ENCODE measurements at regions of chr6 and their contacts with region 1.

Region 1: GRCh38 chr6:43769526-43770416 is at the start of gene VEGFA:
- DNase-seq: peak; percentile 97
- CTCF ChIP-seq: peak; percentile 99

Region 2: GRCh38 chr6:43723737-43724295 is 46.0 kb before region 1 on chr6:
- CTCF ChIA-PET with region 1: interaction called, 28 read pairs
- POLR2A ChIA-PET with region 1: no interaction called
- DNase-seq: peak; percentile 82
- CTCF ChIP-seq: peak; percentile 65

Region 3: DNA sequence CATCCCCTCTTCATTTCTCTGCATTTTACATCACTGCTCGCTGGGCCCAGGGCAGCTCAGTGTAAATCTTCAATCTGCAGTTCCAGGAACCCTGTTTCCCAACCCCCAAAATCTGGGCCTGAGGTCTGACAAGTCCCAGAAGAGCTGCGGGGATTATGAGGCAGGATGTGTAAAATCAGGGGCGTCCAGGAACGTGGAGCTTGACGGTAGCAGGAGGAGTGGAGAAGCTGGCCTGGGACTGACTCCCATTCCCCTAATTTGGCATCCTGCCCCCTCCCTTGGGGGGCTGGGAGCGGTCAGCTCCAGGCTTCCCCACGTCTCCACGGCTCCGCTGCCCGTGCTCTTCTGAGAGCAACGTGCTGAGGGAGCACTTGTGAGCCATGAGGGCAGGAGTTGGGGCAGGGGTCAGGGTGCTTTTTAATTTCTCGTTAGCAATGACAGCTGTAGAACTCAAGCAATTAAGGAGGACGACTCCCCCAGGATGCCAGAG is 23.1 kb before region 1 on chr6:
- CTCF ChIA-PET with region 1: interaction called, 142 read pairs
- POLR2A ChIA-PET with region 1: no interaction called
- DNase-seq: no peak
- CTCF ChIP-seq: no peak

Region 4: DNA sequence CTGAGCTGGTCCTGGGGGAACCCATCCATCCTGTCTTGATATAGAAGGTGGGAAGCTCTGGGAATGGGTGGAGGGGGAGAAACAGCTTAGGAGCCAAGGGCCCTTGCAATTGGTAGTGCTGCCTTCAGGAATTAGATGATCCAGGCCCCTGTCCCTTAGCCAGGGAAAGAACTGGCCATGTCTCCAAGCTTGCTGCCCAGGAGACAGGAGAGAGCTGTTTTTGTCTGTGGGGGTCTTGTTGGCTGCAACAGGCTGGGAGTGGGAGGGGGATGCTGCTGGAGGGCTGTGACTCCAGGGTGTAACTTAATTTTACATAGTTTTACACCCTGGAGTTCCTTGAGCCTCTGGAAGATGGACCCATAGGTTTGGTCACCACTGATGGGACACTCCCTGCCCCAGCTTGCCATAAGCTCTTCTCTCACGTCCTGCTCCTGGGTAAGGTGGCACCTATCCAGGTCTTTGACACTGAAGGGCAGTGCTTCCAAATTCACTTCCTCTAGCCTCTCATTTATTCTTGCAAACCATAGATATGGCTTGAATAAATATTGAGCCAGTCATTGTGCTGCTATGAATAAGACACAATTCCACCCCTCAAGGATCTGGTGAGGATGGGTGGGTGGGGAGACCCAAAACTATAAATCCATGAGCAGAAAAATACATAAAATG is 17.0 kb after region 1 on chr6:
- CTCF ChIA-PET with region 1: interaction called, 33 read pairs
- POLR2A ChIA-PET with region 1: no interaction called
- DNase-seq: no peak
- CTCF ChIP-seq: no peak

Region 5: GRCh38 chr6:43916924-43917877 is 147.4 kb after region 1 on chr6:
- CTCF ChIA-PET with region 1: no interaction called
- POLR2A ChIA-PET with region 1: no interaction called
- DNase-seq: no peak
- CTCF ChIP-seq: no peak

Region 6: GRCh38 chr6:44058617-44059358 is 289.0 kb after region 1 on chr6:
- CTCF ChIA-PET with region 1: interaction called, 21 read pairs
- POLR2A ChIA-PET with region 1: no interaction called
- DNase-seq: peak; percentile 79
- CTCF ChIP-seq: no peak

Measured in GM10248 (cell line).